Activated T-helper 1 cell treated with anti-CD3 and anti-CD28 coated beads, Interleukin-12 subunit alpha, Interleukin-12 subunit beta, Interleukin-2, Interleukin-4 antibody, amounts not matched to agents 30 ng/mL and 10 ng/mL and 1 ng/mL, durations not matched to agents 14 hours and 24 hours and 36 hours (primary cell): ENCODE measurements at regions of chr22 and their contacts with region 1.

Region 1: DNA sequence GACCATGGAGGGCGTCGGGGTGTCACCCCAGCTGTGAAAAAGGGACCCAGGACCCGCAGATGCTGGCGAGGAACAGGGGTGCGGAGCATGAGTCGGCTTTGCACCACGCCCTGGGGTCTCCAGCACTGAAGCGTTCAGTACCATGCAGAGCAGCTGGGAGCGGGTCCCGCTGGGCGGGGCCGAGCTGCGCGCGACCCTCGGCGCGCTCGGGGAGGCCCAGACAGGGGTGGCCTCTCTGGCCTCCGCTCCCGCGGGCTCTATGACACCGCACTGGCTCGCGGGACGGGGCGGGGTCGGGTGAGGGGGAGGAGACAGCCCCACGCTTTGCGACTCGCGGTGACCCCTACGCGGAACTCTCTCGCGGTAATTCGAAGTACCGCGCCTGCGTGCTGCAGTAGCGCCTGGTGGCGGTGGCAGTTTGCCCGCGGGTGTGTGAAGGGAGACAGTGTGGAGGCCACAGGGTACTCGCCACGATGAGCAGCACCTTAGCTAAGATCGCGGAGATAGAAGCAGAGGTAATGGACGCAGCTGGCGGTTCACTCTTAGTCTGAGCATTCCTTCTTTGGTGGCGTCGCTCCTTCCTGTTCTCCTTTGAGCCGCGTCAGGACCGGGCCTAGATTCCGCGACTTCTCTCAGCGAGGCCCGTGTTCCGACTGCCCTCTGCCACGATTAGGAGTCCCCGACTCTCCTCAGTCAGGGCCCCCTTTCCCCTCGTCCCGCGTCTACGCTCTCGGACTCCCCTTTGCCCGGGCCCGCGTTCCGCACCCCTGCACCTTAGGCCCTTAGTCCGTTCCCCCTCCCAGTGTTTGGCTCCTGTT is at the start of gene DRG1:
- DNase-seq: peak; percentile 97
- H3K4me3 Mint-ChIP-seq: peak within 1 kb of the TSS; percentile 100
- H3K27ac Mint-ChIP-seq: peak within 1 kb of the TSS; percentile 93
- H3K4me1 Mint-ChIP-seq: peaks cover 13% of the 10 kb centered on the region
- H3K27me3 Mint-ChIP-seq: peaks cover 2% of the 10 kb centered on the region
- total RNA-seq, gene DRG1: 113 and 125 TPM in 2 replicates

Region 2: GRCh38 chr22:30968924-30969539 is 430.4 kb before region 1 on chr22 and contains the start of gene TUG1:
- intact Hi-C with region 1: loop called (anchors 10 kb)
- DNase-seq: peak; percentile 97
- H3K4me3 Mint-ChIP-seq: peak within 1 kb of the TSS; percentile 91
- H3K27ac Mint-ChIP-seq: peak within 1 kb of the TSS; percentile 96
- H3K4me1 Mint-ChIP-seq: peaks cover 65% of the 10 kb centered on the region
- H3K27me3 Mint-ChIP-seq: no peaks in the 10 kb centered on the region
- total RNA-seq, gene TUG1: 68.0 and 71.3 TPM in 2 replicates

Region 3: DNA sequence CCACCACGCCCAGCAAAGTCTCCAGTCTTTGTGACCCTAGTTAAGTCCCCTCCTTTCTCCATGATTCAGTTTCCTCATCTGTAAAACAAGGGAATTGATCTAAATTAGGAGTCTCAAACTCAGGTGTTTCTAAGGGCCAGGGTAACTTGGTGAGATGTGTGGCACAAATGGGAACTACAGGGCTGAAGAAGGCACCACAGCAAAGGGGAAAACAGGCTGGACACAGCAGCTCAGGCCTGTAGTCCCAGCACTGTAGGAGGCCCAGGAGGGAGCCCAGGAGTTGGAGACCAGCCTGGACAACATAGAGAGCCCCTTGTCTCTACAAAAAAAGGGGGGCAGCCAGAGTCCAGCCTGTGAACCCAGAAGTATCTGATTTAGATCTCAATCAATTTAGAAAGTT is 37.7 kb before region 1 on chr22:
- intact Hi-C with region 1: no loop called
- DNase-seq: no peak
- H3K4me3 Mint-ChIP-seq: no peak overlapping the region
- H3K27ac Mint-ChIP-seq: no peak overlapping the region
- H3K4me1 Mint-ChIP-seq: no peaks in the 10 kb centered on the region
- H3K27me3 Mint-ChIP-seq: no peaks in the 10 kb centered on the region